ENCODE measurements at regions of chr7 and their contacts with region 1.

Region 1: GRCh38 chr7:141220263-141220880 is 146.5 kb downstream of the TMEM178B start:
- DNase-seq: no peak
- H3K4me3 ChIP-seq: no peak overlapping the region
- H3K27ac ChIP-seq: no peak overlapping the region
- H3K4me1 ChIP-seq: peaks cover 0 to 3% (median 1%) of the 10 kb centered on the region in 4 experiments; a peak in 3 of 7 replicates
- H3K27me3 ChIP-seq: no peaks in the 10 kb centered on the region
- CTCF ChIP-seq: peak; percentile 37 to 74 (median 65)
- EP300 ChIP-seq: no peak
- POLR2A ChIP-seq: no peak
- RAD21 ChIP-seq: peak; percentile 89 to 91

Region 2: DNA sequence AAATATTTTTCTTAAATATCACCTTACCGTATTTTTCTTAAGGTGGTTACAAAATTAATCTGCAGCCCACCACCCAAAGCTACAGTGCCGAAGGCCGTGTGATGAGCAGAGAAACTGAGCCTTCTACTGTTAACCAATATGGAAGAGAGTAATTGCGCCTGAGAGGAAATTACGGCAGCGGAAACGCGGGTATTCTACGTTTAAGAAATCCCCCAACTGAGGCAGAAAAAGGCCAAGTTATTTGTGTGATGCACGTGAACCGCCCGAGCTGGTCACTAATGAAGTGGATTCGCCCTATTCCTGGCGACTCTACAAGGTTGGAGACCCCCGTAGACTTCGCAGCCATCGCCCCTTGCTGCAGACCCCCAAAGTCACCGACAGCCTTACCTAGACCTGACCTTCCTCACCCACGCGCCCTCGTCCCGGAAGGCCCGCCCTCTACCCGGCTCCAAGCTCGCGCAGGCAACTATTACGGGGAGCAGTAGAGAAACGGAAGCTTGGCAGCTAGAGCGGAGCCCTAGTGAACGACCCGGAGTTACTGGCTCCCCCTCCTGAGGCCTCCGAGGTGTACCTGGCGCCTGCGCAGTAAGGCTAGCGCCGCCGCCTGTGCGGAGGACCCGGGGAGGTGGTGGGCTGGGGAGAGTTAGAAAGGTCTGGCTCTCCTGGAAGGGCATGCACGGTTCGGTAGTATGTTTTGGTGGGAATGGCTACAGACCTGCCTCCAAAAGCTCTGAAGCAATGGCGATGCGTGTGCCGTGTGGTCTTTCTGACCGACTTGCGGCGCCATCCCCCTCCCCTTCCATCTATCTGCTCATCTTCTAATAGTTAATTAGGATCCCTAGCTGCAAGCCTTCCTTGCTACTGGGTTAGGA is 205.6 kb before region 1 on chr7 and contains the start of gene MRPS33:
- CTCF ChIA-PET with region 1: interaction called, 12 read pairs
- POLR2A ChIA-PET with region 1: interaction called, 4 read pairs
- DNase-seq: peak; percentile 94 to 95
- H3K4me3 ChIP-seq: peak within 1 kb of the TSS; percentile 56 to 90 (median 76)
- H3K27ac ChIP-seq: peak within 1 kb of the TSS; percentile 90
- H3K4me1 ChIP-seq: no peaks in the 10 kb centered on the region; a peak in 1 of 7 replicates
- H3K27me3 ChIP-seq: no peaks in the 10 kb centered on the region
- CTCF ChIP-seq: peak; percentile 76 to 83 (median 82)
- EP300 ChIP-seq: peak in 1 of 2 experiments; percentile 47; a peak in 1 of 3 replicates
- POLR2A ChIP-seq: peak; percentile 99
- RAD21 ChIP-seq: peak; percentile 30 to 36
- total RNA-seq, gene MRPS33: 62.6 and 66.4 TPM in 2 replicates

Region 3: GRCh38 chr7:141027043-141027442 is 193.3 kb before region 1 on chr7:
- CTCF ChIA-PET with region 1: interaction called, 10 read pairs
- POLR2A ChIA-PET with region 1: no interaction called
- DNase-seq: no peak
- H3K4me3 ChIP-seq: no peak overlapping the region
- H3K27ac ChIP-seq: no peak overlapping the region
- H3K4me1 ChIP-seq: no peaks in the 10 kb centered on the region
- H3K27me3 ChIP-seq: no peaks in the 10 kb centered on the region
- CTCF ChIP-seq: peak in 2 of 3 experiments; percentile 32 to 34; a peak in 2 of 4 replicates
- EP300 ChIP-seq: no peak
- POLR2A ChIP-seq: no peak
- RAD21 ChIP-seq: peak in 1 of 2 experiments; percentile 59; a peak in 2 of 4 replicates

Region 4: GRCh38 chr7:141072548-141073172 is 147.7 kb before region 1 on chr7:
- CTCF ChIA-PET with region 1: interaction called, 24 read pairs
- POLR2A ChIA-PET with region 1: interaction called, 3 read pairs
- DNase-seq: peak in 1 of 2 experiments; percentile 71
- H3K4me3 ChIP-seq: peak overlapping the region; percentile 62 to 86 (median 67)
- H3K27ac ChIP-seq: no peak overlapping the region
- H3K4me1 ChIP-seq: peaks cover 2 to 7% (median 4%) of the 10 kb centered on the region in 4 experiments; a peak in 5 of 7 replicates
- H3K27me3 ChIP-seq: peaks cover 0 to 19% (median 10%) of the 10 kb centered on the region in 4 experiments; a peak in 5 of 7 replicates
- CTCF ChIP-seq: no peak
- EP300 ChIP-seq: no peak
- POLR2A ChIP-seq: no peak
- RAD21 ChIP-seq: no peak

Region 5: GRCh38 chr7:141208539-141208938 is 11.8 kb before region 1 on chr7:
- CTCF ChIA-PET with region 1: interaction called, 15 read pairs
- POLR2A ChIA-PET with region 1: interaction called, 8 read pairs
- DNase-seq: no peak
- H3K4me3 ChIP-seq: no peak overlapping the region
- H3K27ac ChIP-seq: peak overlapping the region; percentile 29; the same call in 1 of the 2 replicates
- H3K4me1 ChIP-seq: peaks cover 14 to 36% (median 22%) of the 10 kb centered on the region in 4 experiments
- H3K27me3 ChIP-seq: no peaks in the 10 kb centered on the region
- CTCF ChIP-seq: no peak
- EP300 ChIP-seq: no peak
- POLR2A ChIP-seq: no peak
- RAD21 ChIP-seq: no peak

Region 6: GRCh38 chr7:141231018-141231792 is 10.8 kb after region 1 on chr7:
- CTCF ChIA-PET with region 1: interaction called, 13 read pairs
- POLR2A ChIA-PET with region 1: no interaction called
- DNase-seq: peak in 1 of 2 experiments; percentile 34
- H3K4me3 ChIP-seq: no peak overlapping the region
- H3K27ac ChIP-seq: no peak overlapping the region
- H3K4me1 ChIP-seq: peaks cover 0 to 2% (median 0%) of the 10 kb centered on the region in 4 experiments; a peak in 1 of 7 replicates
- H3K27me3 ChIP-seq: no peaks in the 10 kb centered on the region; a peak in 1 of 7 replicates
- CTCF ChIP-seq: peak; percentile 60 to 68 (median 65)
- EP300 ChIP-seq: no peak
- POLR2A ChIP-seq: no peak
- RAD21 ChIP-seq: peak; percentile 80 to 84

Region 7: DNA sequence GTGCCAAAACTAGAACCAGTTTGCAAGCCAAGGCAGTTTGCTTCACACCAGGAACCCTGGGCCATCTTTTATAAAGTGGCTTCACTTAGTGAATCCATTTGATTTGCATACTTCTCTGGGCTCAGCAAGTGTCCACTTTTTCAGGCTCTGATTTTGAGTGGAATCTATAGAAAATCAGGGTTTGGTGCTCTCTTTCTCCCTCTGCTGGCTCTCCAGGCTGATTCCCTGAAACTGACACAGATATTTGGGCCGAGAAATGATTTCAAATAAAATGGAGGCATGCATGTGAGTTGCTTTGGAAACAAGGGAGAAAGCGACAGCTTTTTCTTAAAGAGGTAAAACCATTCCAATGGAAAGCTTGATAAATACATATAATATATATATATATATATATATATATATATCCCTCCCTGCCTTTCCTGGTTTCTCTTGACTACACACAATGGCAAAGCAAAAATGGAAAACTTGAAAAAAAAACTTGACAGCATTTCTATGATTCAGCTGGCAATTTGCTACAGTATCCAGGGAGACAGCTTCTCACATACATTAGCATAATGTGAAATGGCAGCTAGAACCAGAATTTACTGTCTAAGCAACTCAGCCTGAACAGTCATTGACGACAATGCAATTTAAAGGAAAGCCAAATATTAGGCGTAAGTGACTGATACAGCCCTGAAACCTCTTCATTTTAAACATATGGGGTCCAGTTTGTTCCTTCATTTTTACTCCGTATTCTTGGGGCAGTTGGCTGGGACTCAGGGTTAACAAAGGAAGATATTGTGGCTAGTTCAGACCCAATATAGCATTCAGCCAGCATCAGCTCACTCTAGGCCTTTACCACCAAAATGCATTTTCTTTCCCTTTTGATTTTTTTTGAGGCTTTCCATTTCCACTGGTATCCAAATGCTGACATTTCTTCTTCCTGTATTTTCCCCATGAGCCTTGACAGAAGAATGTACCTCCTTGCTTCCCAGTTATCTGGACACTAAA is 42.0 kb after region 1 on chr7:
- CTCF ChIA-PET with region 1: interaction called, 10 read pairs
- POLR2A ChIA-PET with region 1: no interaction called
- DNase-seq: no peak
- H3K4me3 ChIP-seq: no peak overlapping the region
- H3K27ac ChIP-seq: no peak overlapping the region
- H3K4me1 ChIP-seq: no peaks in the 10 kb centered on the region; a peak in 2 of 7 replicates
- H3K27me3 ChIP-seq: no peaks in the 10 kb centered on the region
- CTCF ChIP-seq: peak in 2 of 3 experiments; percentile 57 to 65; a peak in 3 of 4 replicates
- EP300 ChIP-seq: no peak
- POLR2A ChIP-seq: no peak
- RAD21 ChIP-seq: peak; percentile 55 to 62

Measured in H1 (cell line).